ENCODE measurements at regions of chr16 and their contacts with region 1.

Region 1: DNA sequence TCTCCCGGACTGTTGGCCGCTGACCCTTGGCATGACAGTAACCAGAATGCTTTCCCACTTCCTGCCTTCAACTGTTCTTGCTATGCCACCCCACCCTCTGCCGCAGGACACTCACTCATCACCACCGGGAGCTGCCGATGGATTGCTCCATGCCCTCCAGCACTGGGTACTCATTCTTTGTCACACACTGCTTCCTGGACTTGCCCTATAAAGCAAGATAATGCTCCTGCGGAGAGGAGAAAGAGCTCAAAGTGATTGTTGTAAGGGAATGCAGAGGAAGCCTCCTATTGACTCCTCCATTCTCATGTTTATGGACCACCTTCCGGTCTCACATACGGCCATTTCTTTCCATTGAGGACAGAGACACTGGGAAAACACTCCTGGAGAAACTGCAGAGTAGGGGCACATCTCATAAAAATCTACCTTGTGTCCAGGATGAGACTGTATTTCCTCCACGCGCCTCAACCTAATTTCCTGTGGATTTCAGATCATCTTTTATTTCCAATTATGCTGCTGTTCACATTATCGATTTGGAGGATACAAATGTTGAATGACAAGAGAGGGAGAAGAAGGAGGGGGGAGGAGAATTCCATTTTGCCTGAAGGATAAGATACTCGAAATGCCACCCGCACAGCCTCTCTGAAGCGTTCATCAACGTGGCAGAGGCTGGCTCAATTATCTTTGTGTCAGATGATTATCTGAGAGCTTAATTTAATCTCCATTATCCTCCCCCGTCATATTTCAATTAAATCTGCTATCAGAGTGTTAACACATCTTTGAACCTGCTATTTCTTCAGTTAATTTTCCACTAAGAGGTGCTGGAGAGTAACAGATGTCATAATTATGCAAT is 486.1 kb upstream of the SALL1 start:
- DNase-seq: peak; percentile 89
- H3K4me3 ChIP-seq: peak overlapping the region in 2 of 3 experiments; percentile 7 to 24
- H3K27ac ChIP-seq: peak overlapping the region; percentile 60
- H3K4me1 ChIP-seq: peaks cover 30% of the 10 kb centered on the region
- H3K27me3 ChIP-seq: no peaks in the 10 kb centered on the region
- CTCF ChIP-seq: no peak

Region 2: GRCh38 chr16:51408357-51408756 is 228.8 kb before region 1 on chr16:
- CTCF ChIA-PET with region 1: interaction called, 8 read pairs
- dilution Hi-C with region 1: no loop called
- in situ Hi-C with region 1: no loop called
- intact Hi-C with region 1: loop called (anchors 5 kb)
- DNase-seq: peak; percentile 79
- H3K4me3 ChIP-seq: no peak overlapping the region
- H3K27ac ChIP-seq: peak overlapping the region; percentile 88
- H3K4me1 ChIP-seq: peaks cover 36% of the 10 kb centered on the region
- H3K27me3 ChIP-seq: no peaks in the 10 kb centered on the region
- CTCF ChIP-seq: no peak

Region 3: GRCh38 chr16:51577621-51578303 is 59.4 kb before region 1 on chr16:
- CTCF ChIA-PET with region 1: no interaction called
- dilution Hi-C with region 1: no loop called
- in situ Hi-C with region 1: no loop called
- intact Hi-C with region 1: loop called (anchors 5 kb)
- DNase-seq: peak; percentile 97
- H3K4me3 ChIP-seq: no peak overlapping the region
- H3K27ac ChIP-seq: no peak overlapping the region
- H3K4me1 ChIP-seq: peaks cover 18% of the 10 kb centered on the region
- H3K27me3 ChIP-seq: no peaks in the 10 kb centered on the region
- CTCF ChIP-seq: no peak

Measured in mammary epithelial cell (primary cell).